Activated CD4-positive, alpha-beta T cell treated with anti-CD3 and anti-CD28 coated beads, Interleukin-2, amount 10 ng/mL, durations not matched to agents 24 days and 14 days (primary cell): ENCODE measurements at regions of chr17 and their contacts with region 1.

Region 1: DNA sequence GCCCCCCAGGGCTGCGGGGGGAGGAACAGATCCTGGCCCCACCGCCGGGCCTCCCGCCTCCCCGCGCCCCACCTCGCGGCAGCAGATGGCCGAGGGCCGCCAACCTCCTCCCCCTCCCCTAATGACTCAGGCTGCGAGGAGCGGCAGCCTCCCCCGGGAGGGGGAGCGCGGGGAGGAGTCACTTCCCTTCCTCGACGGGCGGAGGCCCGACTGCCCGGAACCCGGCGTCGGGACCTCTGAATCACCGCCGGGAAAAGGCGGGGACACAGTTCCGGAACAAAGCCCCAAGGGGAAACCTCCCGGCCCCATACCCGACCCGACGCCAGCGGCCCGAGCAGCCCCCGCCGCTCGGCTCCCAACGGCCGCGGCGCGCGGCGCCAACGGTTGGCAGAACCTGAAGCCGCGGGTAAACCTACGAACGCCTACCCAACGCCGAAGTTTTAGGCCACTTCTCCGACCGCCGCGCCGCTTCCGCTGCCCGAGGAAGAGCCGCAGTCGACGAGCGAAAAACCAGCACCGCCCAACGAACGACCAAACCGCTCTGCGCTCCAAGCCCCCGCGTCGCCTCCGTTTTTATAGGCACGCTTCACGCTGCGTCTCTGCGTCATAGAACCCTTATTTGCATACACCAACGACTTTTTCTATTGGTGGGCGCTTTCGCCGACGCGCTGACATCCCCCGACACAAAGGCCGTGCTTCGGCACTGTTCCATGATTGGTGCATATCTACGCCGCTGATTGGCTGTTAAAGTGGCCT is 5.2 kb upstream of the UNK start:
- DNase-seq: peak; percentile 98
- H3K4me3 Mint-ChIP-seq: peak overlapping the region; percentile 87
- H3K27ac Mint-ChIP-seq: peak overlapping the region; percentile 95
- H3K4me1 Mint-ChIP-seq: peaks cover 47% of the 10 kb centered on the region
- H3K27me3 Mint-ChIP-seq: peaks cover 4% of the 10 kb centered on the region

Region 2: DNA sequence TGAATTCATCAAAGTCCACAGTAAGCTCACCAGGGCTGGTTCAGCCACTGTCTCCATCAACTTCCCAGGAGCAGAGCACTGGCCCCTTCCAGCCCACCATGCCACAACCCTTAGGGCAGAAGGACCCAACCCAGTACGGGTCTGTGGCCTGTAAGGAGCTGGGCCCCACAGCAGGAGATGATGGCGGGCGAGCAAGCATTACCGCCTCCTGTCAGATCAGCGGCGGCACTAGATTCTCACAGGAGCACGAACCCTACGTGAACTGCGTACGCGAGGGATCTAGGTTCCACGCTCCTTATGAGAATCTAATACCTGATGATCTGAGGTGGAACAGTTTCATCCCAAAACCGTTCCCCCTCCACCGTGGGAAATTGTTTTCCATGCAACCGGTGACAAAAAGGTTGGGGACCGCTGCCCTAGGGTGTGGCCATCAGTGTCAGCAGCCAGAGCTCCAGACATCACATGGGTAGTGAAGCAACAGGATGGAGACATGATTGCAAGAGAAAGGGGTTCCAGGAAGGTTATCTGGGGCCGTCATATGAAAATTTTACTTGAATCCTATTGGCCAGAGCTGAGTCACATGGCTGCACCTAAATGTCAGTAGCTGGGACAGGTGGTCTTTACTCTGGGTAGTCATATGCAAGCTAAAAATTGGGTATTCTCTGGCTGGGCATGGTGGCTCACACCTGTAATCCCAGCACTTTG is 477.8 kb before region 1 on chr17:
- intact Hi-C with region 1: no loop called
- DNase-seq: no peak
- H3K4me3 Mint-ChIP-seq: no peak overlapping the region
- H3K27ac Mint-ChIP-seq: no peak overlapping the region
- H3K4me1 Mint-ChIP-seq: peaks cover 7% of the 10 kb centered on the region
- H3K27me3 Mint-ChIP-seq: no peaks in the 10 kb centered on the region

Region 3: GRCh38 chr17:75720725-75721462 is 58.5 kb before region 1 on chr17 and contains the start of gene ITGB4:
- intact Hi-C with region 1: no loop called
- DNase-seq: peak; percentile 92
- H3K4me3 Mint-ChIP-seq: peak within 1 kb of the TSS; percentile 81
- H3K27ac Mint-ChIP-seq: no peak within 1 kb of the TSS
- H3K4me1 Mint-ChIP-seq: peaks cover 4% of the 10 kb centered on the region
- H3K27me3 Mint-ChIP-seq: peaks cover 21% of the 10 kb centered on the region
- total RNA-seq, gene ITGB4: 0.71 and 1.8 TPM in 2 replicates

Region 4: GRCh38 chr17:75764711-75765421 is 14.5 kb before region 1 on chr17 and contains the start of gene GALK1:
- intact Hi-C with region 1: loop called (anchors 2 kb)
- DNase-seq: peak; percentile 93
- H3K4me3 Mint-ChIP-seq: peak within 1 kb of the TSS; percentile 88
- H3K27ac Mint-ChIP-seq: peak within 1 kb of the TSS; percentile 84
- H3K4me1 Mint-ChIP-seq: peaks cover 14% of the 10 kb centered on the region
- H3K27me3 Mint-ChIP-seq: no peaks in the 10 kb centered on the region
- total RNA-seq, gene GALK1: 53.3 and 54.7 TPM in 2 replicates

Region 5: DNA sequence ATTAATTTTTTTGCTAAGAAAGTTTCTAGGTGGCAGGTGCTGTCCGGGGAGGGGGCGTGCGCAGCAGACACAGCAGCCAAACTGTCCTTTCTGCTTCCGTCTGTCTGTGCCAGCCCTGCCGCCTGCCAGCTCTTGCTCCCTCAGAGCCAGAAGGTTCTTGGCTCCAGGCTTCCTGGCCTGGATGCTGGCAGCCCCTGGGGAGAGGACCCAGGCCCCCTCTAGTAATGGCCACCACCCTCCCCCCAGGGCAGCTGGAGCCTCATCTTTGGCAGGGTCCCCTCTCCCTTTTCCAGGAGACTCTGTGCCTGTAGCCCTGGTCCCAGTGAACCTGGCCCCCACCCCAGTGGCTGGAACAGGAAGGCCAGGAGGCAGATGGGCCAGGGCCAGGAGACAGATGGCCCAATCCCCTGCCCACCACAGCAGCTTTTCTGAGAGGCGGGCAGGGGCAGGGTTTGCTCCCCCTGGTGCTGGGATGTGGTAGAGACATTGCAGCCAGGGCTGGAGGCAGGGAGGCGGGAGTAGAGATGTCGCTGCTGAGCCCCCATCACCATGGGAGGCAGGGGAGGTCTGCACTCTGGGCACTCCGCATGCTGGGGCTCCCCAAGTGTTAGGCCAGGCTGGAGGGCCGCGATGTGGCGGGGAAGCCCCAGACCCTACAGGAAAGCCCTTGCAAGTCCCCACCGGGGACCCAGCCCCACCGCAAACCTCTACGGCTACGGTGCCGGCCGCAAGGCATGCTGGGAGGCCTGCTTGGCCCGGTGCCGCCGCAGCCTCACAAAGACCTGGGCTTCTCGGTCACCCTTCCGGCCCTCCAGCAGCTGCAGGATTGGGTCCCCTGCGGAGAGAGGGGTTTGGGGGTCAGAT is 48.1 kb after region 1 on chr17:
- intact Hi-C with region 1: loop called (anchors 5 kb)
- DNase-seq: peak; percentile 90
- H3K4me3 Mint-ChIP-seq: peak overlapping the region; percentile 40
- H3K27ac Mint-ChIP-seq: peak overlapping the region; percentile 89
- H3K4me1 Mint-ChIP-seq: peaks cover 7% of the 10 kb centered on the region
- H3K27me3 Mint-ChIP-seq: no peaks in the 10 kb centered on the region

Region 6: DNA sequence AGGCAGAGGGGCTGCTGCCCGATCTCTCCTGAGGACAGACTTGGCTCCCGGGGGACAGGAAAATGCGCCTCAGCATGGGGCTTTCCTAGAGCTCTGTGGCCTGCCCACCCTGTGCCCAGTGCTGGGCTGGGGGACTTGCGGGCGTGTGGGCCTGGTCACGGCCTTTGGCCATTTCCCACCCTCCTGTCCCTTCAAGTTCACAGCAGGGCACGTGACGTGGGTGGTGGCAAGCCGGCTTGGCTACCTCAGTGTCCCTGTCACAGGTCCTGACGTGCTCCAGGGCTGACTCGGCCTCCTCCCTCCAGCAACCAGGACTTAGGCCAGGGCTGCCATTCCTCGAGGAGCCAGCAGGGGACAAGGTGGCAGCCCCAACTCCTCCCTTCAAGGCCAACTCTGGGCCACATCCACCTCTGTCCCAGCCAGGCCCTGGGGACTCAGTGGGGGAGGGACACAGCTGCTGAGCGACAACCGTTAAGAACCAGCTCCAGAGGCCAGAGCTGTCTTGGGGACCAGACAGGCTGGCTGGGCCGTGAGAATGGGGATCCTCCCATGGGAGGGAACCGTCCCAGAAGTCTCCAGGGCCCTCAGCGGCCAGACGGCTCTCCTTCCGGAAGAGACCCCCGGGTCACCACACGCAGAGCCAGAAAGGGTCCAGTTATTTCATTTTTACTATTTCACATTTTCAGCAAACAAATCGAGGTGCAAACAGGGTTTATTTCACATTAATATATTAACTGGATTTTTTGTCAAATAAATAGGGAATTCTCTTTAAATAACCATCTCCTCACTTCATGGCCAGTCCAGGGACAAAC is 65.8 kb after region 1 on chr17:
- intact Hi-C with region 1: loop called (anchors 2 kb)
- DNase-seq: peak; percentile 88
- H3K4me3 Mint-ChIP-seq: peak overlapping the region; percentile 89
- H3K27ac Mint-ChIP-seq: peak overlapping the region; percentile 79
- H3K4me1 Mint-ChIP-seq: peaks cover 19% of the 10 kb centered on the region
- H3K27me3 Mint-ChIP-seq: no peaks in the 10 kb centered on the region

Region 7: GRCh38 chr17:75855310-75856081 is 76.1 kb after region 1 on chr17 and contains the start of gene WBP2:
- intact Hi-C with region 1: loop called (anchors 1 kb)
- DNase-seq: peak; percentile 99
- H3K4me3 Mint-ChIP-seq: no peak within 1 kb of the TSS
- H3K27ac Mint-ChIP-seq: peak within 1 kb of the TSS; percentile 92
- H3K4me1 Mint-ChIP-seq: peaks cover 31% of the 10 kb centered on the region
- H3K27me3 Mint-ChIP-seq: no peaks in the 10 kb centered on the region
- total RNA-seq, gene WBP2: 68.9 and 70.0 TPM in 2 replicates

Region 8: GRCh38 chr17:75896415-75897159 is 117.2 kb after region 1 on chr17 and contains the start of gene TRIM65:
- intact Hi-C with region 1: loop called (anchors 5 kb)
- DNase-seq: peak; percentile 94
- H3K4me3 Mint-ChIP-seq: peak within 1 kb of the TSS; percentile 94
- H3K27ac Mint-ChIP-seq: peak within 1 kb of the TSS; percentile 89
- H3K4me1 Mint-ChIP-seq: peaks cover 22% of the 10 kb centered on the region
- H3K27me3 Mint-ChIP-seq: no peaks in the 10 kb centered on the region
- total RNA-seq, gene TRIM65: 47.6 and 48.1 TPM in 2 replicates